ENCODE measurements at regions of chr6 and their contacts with region 1.

Region 1: DNA sequence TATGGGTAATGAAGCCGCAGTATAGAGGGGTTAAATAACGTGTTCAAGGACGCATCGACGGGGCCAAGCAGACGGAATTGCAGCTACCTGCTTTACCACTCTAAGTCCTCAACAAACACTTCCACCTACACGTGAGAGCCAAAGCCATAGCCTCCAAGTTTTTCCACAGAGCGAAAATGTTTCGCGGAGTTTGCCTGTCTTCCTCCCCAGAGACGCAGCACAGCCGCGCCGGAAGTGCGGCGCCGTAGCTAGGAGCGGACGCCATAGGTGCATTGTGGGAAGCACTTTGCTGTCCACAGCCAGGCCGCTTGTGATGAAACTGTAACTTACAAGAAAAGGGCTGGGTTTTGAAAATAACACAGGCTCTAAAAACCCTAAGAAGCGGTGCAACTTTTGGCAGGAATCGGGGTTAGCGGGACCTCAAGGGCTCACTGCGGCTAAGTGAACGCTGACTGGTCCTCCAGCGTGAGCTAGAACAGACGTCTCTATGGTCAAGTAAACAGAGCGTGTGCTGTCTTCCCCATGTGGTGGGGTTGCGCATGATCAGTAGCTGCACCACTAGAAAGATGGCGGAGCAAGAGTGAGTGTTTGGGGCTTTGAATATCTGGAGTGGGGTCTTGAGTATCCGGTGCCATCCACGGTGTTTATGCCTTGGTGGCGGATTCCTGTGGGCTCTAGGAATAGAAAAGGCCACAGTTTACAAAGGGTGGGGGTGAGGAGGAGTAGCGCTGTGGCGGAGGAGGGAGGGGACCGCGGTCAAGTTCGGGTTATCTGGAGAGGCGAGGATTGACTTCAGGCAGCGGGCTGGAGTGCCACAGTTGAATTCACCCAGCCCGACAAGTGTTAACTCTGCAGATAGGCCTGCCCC is at the start of gene RPL7L1:
- DNase-seq: peak; percentile 76
- ATAC-seq: peak; percentile 92
- H3K4me3 Mint-ChIP-seq: peak within 1 kb of the TSS; percentile 100
- H3K27ac Mint-ChIP-seq: peak within 1 kb of the TSS; percentile 99
- H3K4me1 Mint-ChIP-seq: peaks cover 28% of the 10 kb centered on the region
- H3K27me3 Mint-ChIP-seq: no peaks in the 10 kb centered on the region
- CTCF ChIP-seq: no peak
- total RNA-seq, gene RPL7L1: 94.5 and 110 TPM in 2 replicates

Region 2: GRCh38 chr6:42563697-42564505 is 315.7 kb before region 1 on chr6 and contains the start of gene UBR2:
- CTCF ChIA-PET with region 1: no interaction called
- POLR2A ChIA-PET with region 1: interaction called, 7 read pairs
- intact Hi-C with region 1: loop called (anchors 2 kb)
- DNase-seq: peak; percentile 73
- ATAC-seq: peak; percentile 96
- H3K4me3 Mint-ChIP-seq: peak within 1 kb of the TSS; percentile 92
- H3K27ac Mint-ChIP-seq: peak within 1 kb of the TSS; percentile 92
- H3K4me1 Mint-ChIP-seq: peaks cover 43% of the 10 kb centered on the region
- H3K27me3 Mint-ChIP-seq: no peaks in the 10 kb centered on the region
- CTCF ChIP-seq: no peak
- total RNA-seq, gene UBR2: 34.3 and 40.8 TPM in 2 replicates

Region 3: DNA sequence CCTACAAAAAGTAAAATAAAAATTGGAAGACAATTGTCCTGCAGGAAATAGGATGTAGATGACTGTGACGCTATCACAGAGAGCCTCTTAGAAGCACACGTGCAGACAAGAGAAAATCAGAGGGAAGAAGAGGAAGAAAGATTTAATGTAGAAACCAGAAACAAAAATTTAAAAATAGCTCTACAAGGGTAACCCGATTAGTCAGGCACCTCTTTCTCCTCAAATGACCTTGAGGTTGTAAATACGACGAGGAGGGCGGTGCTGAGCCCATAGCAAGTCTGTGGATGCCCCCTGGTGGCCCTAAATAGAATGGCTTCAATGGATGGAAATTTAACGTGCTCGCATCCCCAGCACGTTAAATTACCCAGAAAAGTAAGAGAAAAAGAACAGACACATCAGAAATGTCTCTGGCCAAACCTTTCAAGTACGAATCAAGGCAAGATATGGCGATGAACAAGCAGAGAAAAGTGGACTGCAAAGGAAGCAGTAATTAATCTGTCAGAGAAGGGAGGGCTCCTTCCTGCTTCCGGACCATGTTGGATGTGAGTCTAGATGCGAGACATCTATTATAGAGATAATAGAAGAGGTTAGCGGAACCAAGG is 153.0 kb before region 1 on chr6:
- CTCF ChIA-PET with region 1: no interaction called
- POLR2A ChIA-PET with region 1: interaction called, 17 read pairs
- intact Hi-C with region 1: loop called (anchors 1 kb)
- DNase-seq: no peak
- ATAC-seq: peak; percentile 98
- H3K4me3 Mint-ChIP-seq: peak overlapping the region; percentile 89
- H3K27ac Mint-ChIP-seq: peak overlapping the region; percentile 96
- H3K4me1 Mint-ChIP-seq: peaks cover 19% of the 10 kb centered on the region
- H3K27me3 Mint-ChIP-seq: no peaks in the 10 kb centered on the region
- CTCF ChIP-seq: peak; percentile 84

Region 4: DNA sequence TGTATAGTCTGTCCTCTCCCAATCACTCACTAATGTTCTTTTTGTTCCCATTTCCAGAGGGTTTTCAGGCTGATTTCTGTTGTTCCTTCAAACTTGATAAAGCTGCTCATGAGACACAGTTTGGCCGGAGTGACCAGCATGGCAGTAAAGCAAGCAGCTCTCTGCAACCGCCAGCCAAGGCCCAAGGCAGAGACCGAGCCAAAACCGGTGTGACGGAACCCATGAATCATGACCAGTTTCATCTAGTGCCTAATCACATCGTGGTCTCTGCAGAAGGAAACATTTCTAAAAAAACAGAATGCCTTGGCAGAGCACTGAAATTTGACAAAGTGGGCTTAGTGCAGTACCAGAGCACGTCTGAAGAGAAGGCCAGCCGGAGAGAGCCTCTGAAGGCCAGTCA is 15.0 kb before region 1 on chr6:
- CTCF ChIA-PET with region 1: no interaction called
- POLR2A ChIA-PET with region 1: interaction called, 13 read pairs
- intact Hi-C with region 1: no loop called
- DNase-seq: no peak
- ATAC-seq: no peak
- H3K4me3 Mint-ChIP-seq: no peak overlapping the region
- H3K27ac Mint-ChIP-seq: no peak overlapping the region
- H3K4me1 Mint-ChIP-seq: no peaks in the 10 kb centered on the region
- H3K27me3 Mint-ChIP-seq: no peaks in the 10 kb centered on the region
- CTCF ChIP-seq: no peak

Region 5: GRCh38 chr6:42896178-42896719 is 16.6 kb after region 1 on chr6:
- CTCF ChIA-PET with region 1: interaction called, 11 read pairs
- POLR2A ChIA-PET with region 1: interaction called, 85 read pairs
- intact Hi-C with region 1: loop called (anchors 1 kb)
- DNase-seq: no peak
- ATAC-seq: no peak
- H3K4me3 Mint-ChIP-seq: no peak overlapping the region
- H3K27ac Mint-ChIP-seq: no peak overlapping the region
- H3K4me1 Mint-ChIP-seq: peaks cover 27% of the 10 kb centered on the region
- H3K27me3 Mint-ChIP-seq: no peaks in the 10 kb centered on the region
- CTCF ChIP-seq: no peak